ENCODE measurements at regions of chr3 and their contacts with region 1.

Region 1: DNA sequence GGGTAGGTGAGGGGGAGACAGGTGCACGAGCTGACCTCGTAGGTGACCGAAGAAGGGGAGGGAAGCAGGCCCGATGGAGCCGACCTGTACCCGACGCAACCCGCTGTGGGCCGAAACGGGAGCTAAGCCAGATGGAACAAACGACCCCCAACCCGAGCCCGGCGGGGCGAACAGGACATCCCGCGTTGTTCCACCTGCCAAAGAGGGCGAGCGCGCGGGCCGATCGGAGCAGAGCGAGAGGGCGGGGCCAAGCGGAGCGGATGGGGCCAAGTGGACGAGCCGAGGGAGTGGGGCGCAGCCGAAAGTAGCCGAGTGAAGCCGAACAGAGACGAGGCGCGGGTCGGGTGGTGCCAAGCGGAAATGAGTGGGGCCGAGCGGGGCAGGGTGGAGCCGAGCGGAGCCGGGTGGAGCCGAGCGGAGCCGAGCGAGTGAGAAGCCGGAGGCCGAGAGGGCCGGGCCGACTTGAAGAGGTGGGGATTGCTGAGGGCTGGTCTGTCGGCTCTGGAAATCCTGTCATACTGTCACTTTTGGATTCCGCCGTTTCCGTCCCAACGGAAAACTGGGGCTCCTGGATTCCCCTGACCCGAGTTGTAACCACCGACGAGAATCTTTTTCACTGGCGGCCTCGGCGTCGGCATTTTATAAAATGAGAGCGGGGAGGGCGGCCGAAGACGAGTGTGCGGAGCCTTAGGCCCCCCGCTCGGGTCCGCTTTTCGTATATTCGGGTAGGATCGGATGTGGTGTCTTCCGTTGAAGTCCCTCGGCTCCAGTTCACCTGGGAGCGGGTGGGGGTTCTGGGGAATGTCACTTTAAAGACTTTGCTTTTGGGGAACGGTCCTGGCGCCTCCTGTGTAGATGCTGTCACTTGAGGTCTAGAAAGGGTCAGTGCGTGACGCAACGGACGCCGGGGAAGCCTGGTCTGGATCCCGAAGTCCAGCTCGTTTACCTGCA is 15.6 kb upstream of the WNT7A start:
- DNase-seq: peak; percentile 93 to 95 (median 93)
- H3K4me3 ChIP-seq: peak overlapping the region; percentile 58 to 72
- H3K4me3 Mint-ChIP-seq: peak overlapping the region; percentile 78 to 94 (median 90)
- H3K27ac ChIP-seq: peak overlapping the region; percentile 73
- H3K27ac Mint-ChIP-seq: peak overlapping the region; percentile 64 to 96 (median 93)
- H3K4me1 ChIP-seq: peaks cover 40% of the 10 kb centered on the region
- H3K4me1 Mint-ChIP-seq: peaks cover 14 to 47% (median 28%) of the 10 kb centered on the region in 4 donors
- H3K27me3 ChIP-seq: no peaks in the 10 kb centered on the region
- H3K27me3 Mint-ChIP-seq: no peaks in the 10 kb centered on the region

Region 2: DNA sequence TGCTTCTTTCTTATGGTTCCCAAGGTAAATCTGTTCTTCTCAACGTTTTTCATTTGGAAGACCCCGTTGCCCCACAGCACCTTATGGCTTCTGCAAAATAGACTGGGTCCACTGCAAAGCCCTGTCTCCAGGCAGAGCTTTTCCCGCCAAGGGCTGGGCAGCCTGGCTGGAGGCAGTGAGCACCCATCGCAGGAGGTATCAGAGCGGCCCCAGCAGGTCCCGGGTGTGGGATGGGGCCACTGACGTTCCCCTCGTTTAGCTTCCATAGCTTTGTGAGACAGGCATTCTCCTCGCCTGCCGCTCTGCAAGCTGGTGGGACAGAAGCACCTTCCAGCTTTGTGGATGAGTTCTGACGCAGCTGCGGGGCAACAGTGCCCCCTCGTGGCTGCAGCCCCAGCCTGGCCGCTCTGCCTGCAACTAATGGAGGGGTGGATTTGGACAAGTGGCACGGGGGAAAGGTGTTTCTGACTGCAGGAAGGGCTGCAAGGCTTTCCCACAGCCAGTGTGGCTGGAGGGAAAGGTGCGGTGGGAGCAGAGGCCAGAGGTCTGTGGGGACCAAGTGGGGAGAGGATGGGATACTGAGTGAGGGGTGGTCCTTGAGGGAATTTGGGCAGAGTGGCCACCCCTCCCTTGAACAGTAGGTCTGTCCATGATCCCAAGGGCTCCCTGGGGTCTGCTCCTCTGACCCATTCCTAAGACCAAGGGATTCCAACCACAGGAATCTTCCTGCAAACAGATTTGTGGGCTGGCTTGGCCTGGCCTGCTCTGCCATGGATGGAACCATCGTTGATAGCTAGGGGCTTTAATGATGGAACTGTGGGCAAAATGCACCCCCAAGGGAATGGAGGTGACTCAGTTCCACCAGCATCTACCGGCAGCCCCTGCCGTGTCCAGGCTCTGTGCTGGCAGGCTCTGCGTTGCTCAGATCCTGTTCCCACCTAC is 247.1 kb before region 1 on chr3:
- CTCF ChIA-PET with region 1: interaction called, 996 read pairs
- POLR2A ChIA-PET with region 1: interaction called, 55 read pairs
- intact Hi-C with region 1: no loop called
- DNase-seq: peak; percentile 62 to 76 (median 72)
- H3K4me3 ChIP-seq: no peak overlapping the region
- H3K4me3 Mint-ChIP-seq: peak overlapping the region in 6 of 8 donors; percentile 35 to 76 (median 56)
- H3K27ac ChIP-seq: no peak overlapping the region
- H3K27ac Mint-ChIP-seq: peak overlapping the region in 3 of 7 donors; percentile 10 to 83 (median 77)
- H3K4me1 ChIP-seq: peaks cover 41% of the 10 kb centered on the region
- H3K4me1 Mint-ChIP-seq: peaks cover 11 to 53% (median 35%) of the 10 kb centered on the region in 4 donors
- H3K27me3 ChIP-seq: no peaks in the 10 kb centered on the region
- H3K27me3 Mint-ChIP-seq: peaks cover 0 to 8% of the 10 kb centered on the region in 2 donors

Region 3: DNA sequence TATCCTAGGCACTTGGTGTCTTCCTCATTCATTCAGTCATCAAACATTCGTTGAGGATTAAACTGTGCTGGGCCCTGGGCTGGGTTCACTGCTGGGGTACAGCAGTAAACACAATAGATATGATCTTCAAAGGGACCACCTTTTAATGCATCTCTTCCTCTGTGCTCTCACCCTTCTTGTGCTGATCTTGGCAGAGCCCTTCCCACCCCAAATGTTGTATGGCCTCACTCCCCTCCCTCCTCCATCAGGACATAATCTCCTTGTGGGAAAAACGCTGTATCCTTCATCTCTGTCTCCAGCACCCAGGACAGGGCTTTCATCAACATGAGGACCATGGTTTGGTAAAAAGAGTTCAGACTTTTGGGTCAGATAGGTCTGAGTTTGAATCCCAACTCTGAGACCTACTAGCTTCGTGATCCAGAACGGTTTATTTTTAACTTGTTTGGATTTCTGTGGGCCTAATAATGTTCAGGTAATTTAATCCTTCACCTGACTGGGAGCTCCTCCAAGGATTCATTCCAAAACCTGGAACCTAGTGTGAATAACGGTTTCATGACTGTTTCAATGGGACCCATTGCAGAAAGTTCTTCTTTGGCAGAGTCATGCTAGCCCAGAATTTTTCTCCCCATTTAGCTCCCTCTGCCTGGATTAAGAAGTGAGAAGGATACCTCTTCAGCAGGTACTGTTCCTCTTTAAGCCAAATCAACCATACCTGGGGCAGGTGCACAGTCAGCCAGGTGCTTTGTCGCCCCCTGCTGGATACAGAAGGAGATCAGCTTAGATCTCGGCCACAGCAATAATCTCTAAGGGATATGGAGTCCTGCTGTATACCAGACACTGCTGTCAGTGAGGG is 10.4 kb before region 1 on chr3:
- CTCF ChIA-PET with region 1: interaction called, 52 read pairs
- POLR2A ChIA-PET with region 1: interaction called, 48 read pairs
- intact Hi-C with region 1: loop called (anchors 1 kb)
- DNase-seq: peak; percentile 77 to 80 (median 78)
- H3K4me3 ChIP-seq: no peak overlapping the region
- H3K4me3 Mint-ChIP-seq: peak overlapping the region in 2 of 8 donors; percentile 60 to 74
- H3K27ac ChIP-seq: no peak overlapping the region
- H3K27ac Mint-ChIP-seq: peak overlapping the region in 5 of 7 donors; percentile 1 to 76 (median 63)
- H3K4me1 ChIP-seq: peaks cover 20% of the 10 kb centered on the region
- H3K4me1 Mint-ChIP-seq: peaks cover 4 to 31% (median 16%) of the 10 kb centered on the region in 4 donors
- H3K27me3 ChIP-seq: no peaks in the 10 kb centered on the region
- H3K27me3 Mint-ChIP-seq: peaks cover 16 to 17% of the 10 kb centered on the region in 2 donors

Region 4: GRCh38 chr3:13916375-13916774 is 20.9 kb after region 1 on chr3:
- CTCF ChIA-PET with region 1: no interaction called
- POLR2A ChIA-PET with region 1: no interaction called
- intact Hi-C with region 1: no loop called
- DNase-seq: no peak
- H3K4me3 ChIP-seq: no peak overlapping the region
- H3K4me3 Mint-ChIP-seq: no peak overlapping the region
- H3K27ac ChIP-seq: no peak overlapping the region
- H3K27ac Mint-ChIP-seq: no peak overlapping the region
- H3K4me1 ChIP-seq: no peaks in the 10 kb centered on the region
- H3K4me1 Mint-ChIP-seq: no peaks in the 10 kb centered on the region
- H3K27me3 ChIP-seq: no peaks in the 10 kb centered on the region
- H3K27me3 Mint-ChIP-seq: peaks cover 0 to 5% of the 10 kb centered on the region in 2 donors

Region 5: GRCh38 chr3:14178247-14179113 is 283.1 kb after region 1 on chr3 and contains the starts of genes LSM3 and XPC:
- CTCF ChIA-PET with region 1: interaction called, 21 read pairs
- POLR2A ChIA-PET with region 1: interaction called, 27 read pairs
- intact Hi-C with region 1: loop called (anchors 1 kb)
- DNase-seq: peak; percentile 97 to 100 (median 99)
- H3K4me3 ChIP-seq: peak within 1 kb of the TSS; percentile 78 to 81
- H3K4me3 Mint-ChIP-seq: peak within 1 kb of the TSS; percentile 92 to 99 (median 97)
- H3K27ac ChIP-seq: peak within 1 kb of the TSS; percentile 97
- H3K27ac Mint-ChIP-seq: peak within 1 kb of the TSS; percentile 93 to 100 (median 99)
- H3K4me1 ChIP-seq: peaks cover 57% of the 10 kb centered on the region
- H3K4me1 Mint-ChIP-seq: peaks cover 55 to 81% (median 63%) of the 10 kb centered on the region in 4 donors
- H3K27me3 ChIP-seq: no peaks in the 10 kb centered on the region
- H3K27me3 Mint-ChIP-seq: no peaks in the 10 kb centered on the region
- total RNA-seq, gene LSM3: 7.2 to 8.2 TPM
- total RNA-seq, gene XPC: 104 to 108 TPM

Region 6: DNA sequence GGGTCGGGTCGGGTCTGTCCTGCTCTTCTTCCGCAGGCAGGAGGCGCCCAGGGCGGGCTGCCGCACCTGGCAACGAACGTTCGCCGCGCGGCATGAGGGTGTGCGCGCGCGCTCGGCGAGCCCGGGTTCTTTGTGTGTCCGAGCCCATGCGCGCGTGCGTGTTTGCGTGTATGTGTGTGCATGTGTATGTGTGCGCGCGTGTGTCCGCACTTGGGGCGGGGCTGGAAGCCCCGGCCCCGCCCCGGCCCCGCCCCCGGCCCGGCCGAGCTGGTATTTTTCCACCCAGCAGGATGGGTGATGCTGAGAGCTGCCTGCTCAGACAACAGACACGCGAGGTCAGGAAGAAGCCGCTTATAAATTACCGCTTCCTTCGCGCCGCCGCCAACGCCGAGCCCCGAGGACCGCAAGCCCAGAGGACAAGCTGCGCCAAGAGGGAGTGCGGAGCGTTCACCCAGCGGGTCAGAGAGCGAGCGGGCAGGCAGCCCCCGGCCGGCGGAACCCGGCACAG is 506.9 kb after region 1 on chr3 and contains the start of gene SLC6A6:
- CTCF ChIA-PET with region 1: interaction called, 5 read pairs
- POLR2A ChIA-PET with region 1: interaction called, 13 read pairs
- intact Hi-C with region 1: loop called (anchors 1 kb)
- DNase-seq: peak; percentile 93 to 96 (median 95)
- H3K4me3 ChIP-seq: peak within 1 kb of the TSS; percentile 62 to 100
- H3K4me3 Mint-ChIP-seq: peak within 1 kb of the TSS; percentile 96 to 100 (median 97)
- H3K27ac ChIP-seq: peak within 1 kb of the TSS; percentile 83
- H3K27ac Mint-ChIP-seq: peak within 1 kb of the TSS; percentile 96 to 100 (median 98)
- H3K4me1 ChIP-seq: peaks cover 51% of the 10 kb centered on the region
- H3K4me1 Mint-ChIP-seq: peaks cover 31 to 70% (median 45%) of the 10 kb centered on the region in 4 donors
- H3K27me3 ChIP-seq: no peaks in the 10 kb centered on the region
- H3K27me3 Mint-ChIP-seq: no peaks in the 10 kb centered on the region
- total RNA-seq, gene SLC6A6: 50.6 to 51.8 TPM

Region 7: DNA sequence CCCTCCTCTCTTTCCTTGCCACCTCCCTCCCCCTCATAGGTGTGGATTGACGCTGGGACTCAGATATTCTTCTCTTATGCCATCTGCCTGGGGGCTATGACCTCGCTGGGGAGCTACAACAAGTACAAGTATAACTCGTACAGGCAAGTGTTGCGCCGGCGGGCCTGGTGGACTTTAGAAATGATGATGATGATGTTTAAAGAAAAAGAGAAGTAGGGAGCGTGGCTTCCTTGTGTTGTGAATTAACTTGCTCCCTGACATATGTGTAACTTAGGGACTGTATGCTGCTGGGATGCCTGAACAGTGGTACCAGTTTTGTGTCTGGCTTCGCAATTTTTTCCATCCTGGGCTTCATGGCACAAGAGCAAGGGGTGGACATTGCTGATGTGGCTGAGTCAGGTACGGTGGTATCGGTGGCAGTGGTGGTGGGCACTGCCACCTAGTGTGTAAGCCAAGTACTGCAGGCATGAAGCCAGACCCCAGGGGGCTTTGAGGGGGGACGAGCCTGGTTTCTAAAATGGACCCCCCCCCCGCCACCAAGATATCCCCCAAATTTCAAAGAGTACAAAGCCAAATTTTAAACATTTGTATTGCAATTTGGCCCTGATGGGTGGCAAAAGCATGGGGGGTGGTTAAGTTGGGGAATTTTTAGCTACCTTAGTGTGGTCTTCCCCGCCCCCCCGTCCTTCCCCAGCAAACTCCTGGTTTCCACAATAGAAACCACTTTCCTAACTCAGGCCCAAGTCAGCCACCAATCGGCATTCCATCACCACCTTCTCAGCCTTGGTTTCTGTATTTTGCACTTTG is 572.6 kb after region 1 on chr3:
- CTCF ChIA-PET with region 1: interaction called, 24 read pairs
- POLR2A ChIA-PET with region 1: no interaction called
- intact Hi-C with region 1: loop called (anchors 2 kb)
- DNase-seq: peak in 4 of 5 donors; percentile 26 to 42 (median 36)
- H3K4me3 ChIP-seq: no peak overlapping the region
- H3K4me3 Mint-ChIP-seq: no peak overlapping the region
- H3K27ac ChIP-seq: no peak overlapping the region
- H3K27ac Mint-ChIP-seq: peak overlapping the region in 4 of 7 donors; percentile 36 to 81 (median 54)
- H3K4me1 ChIP-seq: no peaks in the 10 kb centered on the region
- H3K4me1 Mint-ChIP-seq: peaks cover 0 to 2% (median 0%) of the 10 kb centered on the region in 4 donors
- H3K27me3 ChIP-seq: no peaks in the 10 kb centered on the region
- H3K27me3 Mint-ChIP-seq: no peaks in the 10 kb centered on the region

Region 8: DNA sequence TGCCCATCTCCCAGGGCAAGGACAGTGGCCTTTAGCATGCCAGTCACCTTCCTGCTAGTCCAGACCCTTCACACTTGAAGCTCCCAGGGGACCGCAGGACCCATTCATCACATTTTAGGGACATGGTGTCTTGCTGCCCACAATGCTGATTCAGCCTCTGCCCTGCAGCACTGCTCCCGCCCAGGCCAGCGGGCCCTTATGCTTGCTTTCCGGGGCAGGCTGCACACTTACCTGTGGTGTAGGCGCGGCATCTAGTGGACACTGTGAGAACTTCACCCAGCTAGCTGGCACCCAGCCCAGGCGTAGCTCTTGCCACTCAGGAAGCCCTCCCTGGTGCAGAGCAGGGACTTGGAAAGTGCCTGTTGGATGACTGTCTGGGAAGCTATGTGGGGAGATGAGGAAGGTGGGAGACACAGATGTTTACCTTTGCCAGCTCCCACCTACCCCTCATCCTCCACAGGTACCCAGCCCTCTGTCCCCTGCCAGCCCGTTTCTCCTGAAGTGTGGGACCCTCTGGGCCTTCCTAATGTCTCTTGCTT is 1025.7 kb after region 1 on chr3:
- CTCF ChIA-PET with region 1: interaction called, 5 read pairs
- POLR2A ChIA-PET with region 1: no interaction called
- intact Hi-C with region 1: loop called (anchors 2 kb)
- DNase-seq: peak; percentile 73 to 79 (median 77)
- H3K4me3 ChIP-seq: no peak overlapping the region
- H3K4me3 Mint-ChIP-seq: no peak overlapping the region
- H3K27ac ChIP-seq: no peak overlapping the region
- H3K27ac Mint-ChIP-seq: no peak overlapping the region
- H3K4me1 ChIP-seq: peaks cover 5% of the 10 kb centered on the region
- H3K4me1 Mint-ChIP-seq: peaks cover 0 to 4% (median 0%) of the 10 kb centered on the region in 4 donors
- H3K27me3 ChIP-seq: no peaks in the 10 kb centered on the region
- H3K27me3 Mint-ChIP-seq: peaks cover 0 to 2% of the 10 kb centered on the region in 2 donors

Measured in CD4-positive, alpha-beta memory T cell (primary cell).